ENCODE measurements at regions of chr19 and their contacts with region 1.

Region 1: DNA sequence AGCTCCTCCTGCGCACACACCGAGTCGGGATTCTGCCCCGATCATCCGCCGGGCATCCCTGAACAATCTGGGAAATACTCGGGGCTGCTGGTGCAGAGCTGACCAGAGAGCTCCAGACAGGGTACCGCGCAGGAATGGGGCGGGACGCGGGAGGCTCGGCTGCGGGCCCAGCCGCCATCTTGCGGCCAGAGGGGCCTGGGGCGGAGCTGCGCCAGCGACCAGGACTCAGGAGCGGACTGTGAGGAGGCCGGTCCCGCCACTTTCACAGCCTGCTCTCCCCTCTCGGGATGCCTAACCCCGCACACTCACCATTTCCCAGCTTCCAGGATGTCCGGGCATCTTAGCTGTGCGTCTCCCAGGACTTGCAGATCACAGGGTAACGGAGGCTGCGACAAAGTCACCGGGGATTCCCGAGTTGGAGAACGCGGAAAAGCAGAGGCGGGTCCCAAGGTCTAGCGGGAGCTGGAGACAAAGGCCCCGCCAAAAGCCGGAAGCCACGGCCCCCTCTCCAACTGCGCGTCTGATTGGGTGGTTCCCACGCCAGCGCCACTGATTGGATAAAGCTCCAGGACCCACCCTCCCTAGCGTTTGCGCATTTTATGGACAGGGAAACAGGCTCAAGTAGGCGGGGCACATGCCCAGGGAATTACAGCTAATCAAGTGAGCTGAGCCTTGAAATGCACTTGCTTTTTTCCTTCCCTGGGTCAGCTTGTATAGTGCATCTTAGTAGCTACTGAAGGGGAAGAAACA is 15.8 kb upstream of the ZNF43 start:
- DNase-seq: peak; percentile 87
- CTCF ChIP-seq: no peak

Region 2: GRCh38 chr19:21835810-21836444 is 15.8 kb before region 1 on chr19 and contains the start of gene ZNF43:
- CTCF ChIA-PET with region 1: interaction called, 3 read pairs
- POLR2A ChIA-PET with region 1: interaction called, 13 read pairs
- DNase-seq: peak; percentile 82
- CTCF ChIP-seq: peak; percentile 0